Activated T-helper 2 cell treated with anti-CD3 and anti-CD28 coated beads, Interferon-gamma antibody, Interleukin-2, Interleukin-4, amounts not matched to agents 10 μg/mL and 5 μg/mL and 100 μg/mL, durations not matched to agents 14 hours and 24 hours and 36 hours (primary cell): ENCODE measurements at regions of chr2 and their contacts with region 1.

Region 1: GRCh38 chr2:147910990-147911473 is 66.2 kb downstream of the ACVR2A start:
- DNase-seq: peak; percentile 9
- H3K4me3 Mint-ChIP-seq: no peak overlapping the region
- H3K27ac Mint-ChIP-seq: no peak overlapping the region
- H3K4me1 Mint-ChIP-seq: peaks cover 2% of the 10 kb centered on the region
- H3K27me3 Mint-ChIP-seq: peaks cover 12% of the 10 kb centered on the region

Region 2: DNA sequence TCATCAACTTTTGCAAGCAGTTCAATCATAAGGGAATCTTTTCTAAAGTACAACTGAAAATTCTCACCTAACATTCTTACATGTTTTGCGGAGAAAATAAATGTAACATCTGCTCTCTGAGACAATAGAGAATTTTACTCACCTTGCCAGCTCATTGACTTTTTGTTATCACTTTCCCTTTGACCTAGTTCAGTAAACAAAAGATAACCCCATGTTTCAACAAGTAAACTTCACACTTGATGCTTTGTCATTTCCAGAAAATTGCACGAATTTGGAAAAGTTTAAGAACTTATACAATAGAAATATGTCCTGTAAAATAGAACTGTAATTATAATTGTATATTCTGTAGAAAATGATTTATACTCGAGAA is 1176.2 kb before region 1 on chr2:
- intact Hi-C with region 1: loop called (anchors 5 kb)
- DNase-seq: no peak
- H3K4me3 Mint-ChIP-seq: no peak overlapping the region
- H3K27ac Mint-ChIP-seq: no peak overlapping the region
- H3K4me1 Mint-ChIP-seq: no peaks in the 10 kb centered on the region
- H3K27me3 Mint-ChIP-seq: no peaks in the 10 kb centered on the region

Region 3: DNA sequence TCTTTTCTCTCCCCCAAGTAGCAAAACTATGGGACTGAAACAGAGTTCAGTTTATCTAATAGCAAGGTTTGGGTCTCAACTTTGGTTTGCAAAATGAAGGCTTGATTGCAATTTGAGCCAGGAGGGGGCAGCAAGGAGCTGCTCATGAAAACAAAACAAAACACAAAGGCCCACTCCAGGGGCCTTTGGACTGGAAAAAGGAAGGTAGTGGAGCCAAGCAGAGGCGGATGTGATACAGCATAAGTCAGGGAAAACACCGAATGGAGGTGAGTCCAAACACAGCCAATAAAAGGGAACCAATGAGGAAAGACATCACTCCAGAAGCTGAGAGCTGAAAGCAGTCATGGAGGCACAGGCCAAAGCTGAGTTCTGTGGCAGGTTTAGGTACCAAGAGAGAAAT is 865.9 kb before region 1 on chr2:
- intact Hi-C with region 1: loop called (anchors 1 kb)
- DNase-seq: peak; percentile 19
- H3K4me3 Mint-ChIP-seq: no peak overlapping the region
- H3K27ac Mint-ChIP-seq: no peak overlapping the region
- H3K4me1 Mint-ChIP-seq: peaks cover 3% of the 10 kb centered on the region
- H3K27me3 Mint-ChIP-seq: peaks cover 5% of the 10 kb centered on the region

Region 4: GRCh38 chr2:147082850-147083522 is 828.0 kb before region 1 on chr2:
- intact Hi-C with region 1: loop called (anchors 1 kb)
- DNase-seq: peak; percentile 31
- H3K4me3 Mint-ChIP-seq: no peak overlapping the region
- H3K27ac Mint-ChIP-seq: no peak overlapping the region
- H3K4me1 Mint-ChIP-seq: peaks cover 5% of the 10 kb centered on the region
- H3K27me3 Mint-ChIP-seq: peaks cover 7% of the 10 kb centered on the region